GM12878 (cell line): ENCODE measurements at regions of chr17 and their contacts with region 1.

Region 1: GRCh38 chr17:36601303-36602029 is at the start of gene MRM1:
- DNase-seq: peak; percentile 77
- ATAC-seq: peak; percentile 92
- H3K4me3 ChIP-seq: peak within 1 kb of the TSS; percentile 89
- H3K27ac ChIP-seq: peak within 1 kb of the TSS; percentile 90
- H3K4me1 ChIP-seq: peaks cover 13% of the 10 kb centered on the region
- H3K27me3 ChIP-seq: no peaks in the 10 kb centered on the region
- CTCF ChIP-seq: peak in 1 of 3 experiments; percentile 28; a peak in 4 of 6 replicates
- EP300 ChIP-seq: peak in 1 of 2 experiments; percentile 25; a peak in 1 of 4 replicates
- POLR2A ChIP-seq: peak; percentile 96
- RAD21 ChIP-seq: no peak
- polyA plus RNA-seq, gene MRM1: 0.23 to 1.7 TPM

Region 2: GRCh38 chr17:35969558-35970380 is 631.7 kb before region 1 on chr17:
- CTCF ChIA-PET with region 1: interaction called, 7 read pairs
- POLR2A ChIA-PET with region 1: no interaction called
- RAD21 ChIA-PET with region 1: interaction called, 10 read pairs
- SMC1A ChIA-PET with region 1: interaction called, 3 read pairs
- in situ Hi-C with region 1: no loop called
- intact Hi-C with region 1: no loop called
- DNase-seq: peak; percentile 45
- ATAC-seq: peak; percentile 92
- H3K4me3 ChIP-seq: no peak overlapping the region
- H3K27ac ChIP-seq: no peak overlapping the region
- H3K4me1 ChIP-seq: no peaks in the 10 kb centered on the region
- H3K27me3 ChIP-seq: no peaks in the 10 kb centered on the region
- CTCF ChIP-seq: peak; percentile 77 to 92 (median 86); a peak in 5 of 6 replicates
- EP300 ChIP-seq: no peak
- POLR2A ChIP-seq: no peak
- RAD21 ChIP-seq: peak; percentile 95

Region 3: DNA sequence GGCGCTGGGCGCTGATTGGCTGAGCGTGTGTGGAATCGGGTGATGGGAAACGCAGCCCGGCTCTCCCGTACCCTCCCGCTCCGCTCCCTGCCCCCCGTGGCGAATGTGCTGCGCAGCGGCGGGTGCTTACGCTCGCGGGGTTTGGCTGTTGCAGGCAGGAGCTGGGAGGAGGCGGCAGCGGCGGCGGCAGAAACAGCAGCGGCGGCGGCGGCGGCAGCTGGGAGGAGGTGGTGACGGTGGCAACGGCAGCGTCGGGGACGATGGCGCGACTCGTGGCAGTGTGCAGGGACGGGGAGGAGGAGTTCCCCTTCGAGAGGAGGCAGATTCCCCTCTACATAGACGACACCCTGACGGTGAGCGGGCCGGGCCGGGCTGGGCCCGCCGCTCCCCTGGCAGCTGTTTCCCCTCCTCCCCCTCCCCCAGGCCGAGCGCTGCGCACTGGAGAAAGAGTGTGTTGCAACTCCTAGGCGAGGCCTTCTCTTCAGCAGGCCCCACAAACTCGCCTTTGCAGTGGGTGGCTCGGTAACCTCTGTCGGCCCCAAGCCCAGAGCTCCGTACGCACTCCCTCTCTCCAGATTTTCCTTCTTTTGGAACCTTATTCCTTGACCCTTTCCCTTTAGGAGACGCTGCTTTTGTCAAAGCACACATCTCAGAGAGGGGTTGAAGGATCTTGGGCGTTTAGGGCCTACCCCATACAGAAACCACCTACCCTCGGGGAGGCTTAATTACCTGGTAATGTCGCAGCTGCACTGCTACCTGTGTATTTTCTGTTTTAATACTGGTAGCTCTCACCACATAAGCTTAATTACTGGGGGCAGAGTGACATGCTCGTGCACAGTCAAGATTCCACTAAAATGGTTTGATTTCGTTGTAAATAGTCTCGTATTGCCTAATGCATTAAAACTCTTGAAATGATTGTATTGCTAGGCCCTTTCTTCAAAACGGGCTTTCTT is 55.7 kb before region 1 on chr17:
- CTCF ChIA-PET with region 1: interaction called, 34 read pairs
- POLR2A ChIA-PET with region 1: interaction called, 28 read pairs
- RAD21 ChIA-PET with region 1: interaction called, 15 read pairs
- SMC1A ChIA-PET with region 1: interaction called, 9 read pairs
- in situ Hi-C with region 1: no loop called
- intact Hi-C with region 1: loop called (anchors 5 kb)
- DNase-seq: peak; percentile 82
- ATAC-seq: peak; percentile 85
- H3K4me3 ChIP-seq: peak overlapping the region; percentile 83
- H3K27ac ChIP-seq: peak overlapping the region; percentile 67
- H3K4me1 ChIP-seq: peaks cover 12% of the 10 kb centered on the region; the same call in 1 of the 2 replicates
- H3K27me3 ChIP-seq: no peaks in the 10 kb centered on the region
- CTCF ChIP-seq: peak in 1 of 3 experiments; percentile 1; a peak in 1 of 6 replicates
- EP300 ChIP-seq: peak in 1 of 2 experiments; percentile 99; a peak in 2 of 4 replicates
- POLR2A ChIP-seq: peak; percentile 79
- RAD21 ChIP-seq: no peak

Region 4: GRCh38 chr17:36617773-36618172 is 16.3 kb after region 1 on chr17:
- CTCF ChIA-PET with region 1: interaction called, 15 read pairs
- POLR2A ChIA-PET with region 1: no interaction called
- RAD21 ChIA-PET with region 1: interaction called, 5 read pairs
- SMC1A ChIA-PET with region 1: interaction called, 7 read pairs
- in situ Hi-C with region 1: no loop called
- intact Hi-C with region 1: no loop called
- DNase-seq: no peak
- ATAC-seq: no peak
- H3K4me3 ChIP-seq: no peak overlapping the region
- H3K27ac ChIP-seq: no peak overlapping the region
- H3K4me1 ChIP-seq: no peaks in the 10 kb centered on the region
- H3K27me3 ChIP-seq: no peaks in the 10 kb centered on the region
- CTCF ChIP-seq: no peak
- EP300 ChIP-seq: no peak
- POLR2A ChIP-seq: no peak
- RAD21 ChIP-seq: no peak

Region 5: DNA sequence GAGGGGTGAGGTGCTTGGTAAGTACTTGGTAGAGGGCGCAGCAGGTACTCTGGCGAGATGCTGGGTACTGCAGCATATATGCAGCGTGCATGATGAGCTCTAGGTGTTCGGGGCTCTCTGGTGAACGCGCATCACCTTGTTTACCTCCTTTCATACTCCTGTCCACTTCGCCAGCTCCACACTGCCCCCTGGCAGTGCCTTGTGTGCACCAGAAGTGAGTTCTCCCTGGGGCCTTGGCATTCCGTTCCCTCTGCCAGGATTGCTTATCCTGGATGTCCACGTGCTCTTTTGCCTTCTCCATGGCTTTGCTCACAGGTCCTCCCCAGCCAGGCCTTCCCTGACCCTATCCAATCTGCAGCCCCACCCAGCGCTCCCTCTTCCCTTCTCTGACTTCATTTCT is 154.1 kb after region 1 on chr17:
- CTCF ChIA-PET with region 1: interaction called, 13 read pairs
- POLR2A ChIA-PET with region 1: no interaction called
- RAD21 ChIA-PET with region 1: interaction called, 4 read pairs
- SMC1A ChIA-PET with region 1: no interaction called
- in situ Hi-C with region 1: no loop called
- intact Hi-C with region 1: no loop called
- DNase-seq: no peak
- ATAC-seq: peak; percentile 48; the same call in 2 of the 3 replicates
- H3K4me3 ChIP-seq: no peak overlapping the region
- H3K27ac ChIP-seq: no peak overlapping the region
- H3K4me1 ChIP-seq: no peaks in the 10 kb centered on the region
- H3K27me3 ChIP-seq: no peaks in the 10 kb centered on the region; a peak in 1 of 4 replicates
- CTCF ChIP-seq: peak; percentile 39 to 49 (median 44); a peak in 5 of 6 replicates
- EP300 ChIP-seq: no peak
- POLR2A ChIP-seq: no peak
- RAD21 ChIP-seq: peak; percentile 33; the same call in 1 of the 2 replicates

Region 6: DNA sequence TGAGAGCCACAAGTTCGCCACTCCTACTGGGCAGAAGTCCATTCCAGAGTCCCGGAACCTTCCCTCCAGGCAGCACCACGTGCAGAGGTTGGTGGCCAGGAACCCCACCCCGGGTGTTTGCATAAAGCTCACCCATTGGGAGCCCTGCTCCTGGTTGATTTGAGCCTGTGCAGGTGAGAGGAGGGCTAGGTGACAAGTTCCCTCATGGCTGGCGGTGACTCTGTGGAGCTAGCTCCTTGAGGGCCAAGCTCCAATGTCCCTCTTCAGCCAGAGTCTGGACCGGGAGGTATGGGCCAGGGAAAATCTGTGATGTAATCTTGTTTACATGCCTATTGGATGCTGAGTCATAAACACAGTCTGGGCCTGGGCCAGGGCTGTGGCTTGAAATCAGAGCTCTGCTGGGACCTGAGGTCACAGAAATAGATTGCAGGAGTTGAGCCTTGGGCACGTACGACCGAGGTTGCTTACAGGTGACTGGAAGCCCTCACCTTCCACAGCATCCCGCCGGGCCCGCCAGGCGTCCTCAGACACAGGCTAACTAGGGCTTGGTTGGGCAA is 466.2 kb after region 1 on chr17:
- CTCF ChIA-PET with region 1: no interaction called
- POLR2A ChIA-PET with region 1: no interaction called
- RAD21 ChIA-PET with region 1: no interaction called
- SMC1A ChIA-PET with region 1: no interaction called
- in situ Hi-C with region 1: loop called (anchors 25 kb)
- intact Hi-C with region 1: no loop called
- DNase-seq: no peak
- ATAC-seq: no peak
- H3K4me3 ChIP-seq: no peak overlapping the region
- H3K27ac ChIP-seq: no peak overlapping the region
- H3K4me1 ChIP-seq: no peaks in the 10 kb centered on the region
- H3K27me3 ChIP-seq: no peaks in the 10 kb centered on the region
- CTCF ChIP-seq: no peak
- EP300 ChIP-seq: no peak
- POLR2A ChIP-seq: no peak
- RAD21 ChIP-seq: no peak

Region 7: GRCh38 chr17:37358830-37359681 is 757.6 kb after region 1 on chr17:
- CTCF ChIA-PET with region 1: interaction called, 3 read pairs
- POLR2A ChIA-PET with region 1: interaction called, 3 read pairs
- RAD21 ChIA-PET with region 1: no interaction called
- SMC1A ChIA-PET with region 1: no interaction called
- in situ Hi-C with region 1: loop called (anchors 10 kb)
- intact Hi-C with region 1: no loop called
- DNase-seq: peak; percentile 80
- ATAC-seq: peak; percentile 95
- H3K4me3 ChIP-seq: peak overlapping the region; percentile 78
- H3K27ac ChIP-seq: peak overlapping the region; percentile 71
- H3K4me1 ChIP-seq: peaks cover 12% of the 10 kb centered on the region
- H3K27me3 ChIP-seq: no peaks in the 10 kb centered on the region
- CTCF ChIP-seq: 0 out of 6 replicates have a peak, but pooled peaks of 1 of the 3 experiments have one; percentile 10
- EP300 ChIP-seq: no peak
- POLR2A ChIP-seq: peak; percentile 79
- RAD21 ChIP-seq: no peak